Naive thymus-derived CD4-positive, alpha-beta T cell (primary cell): ENCODE measurements at regions of chr7 and their contacts with region 1.

Region 1: DNA sequence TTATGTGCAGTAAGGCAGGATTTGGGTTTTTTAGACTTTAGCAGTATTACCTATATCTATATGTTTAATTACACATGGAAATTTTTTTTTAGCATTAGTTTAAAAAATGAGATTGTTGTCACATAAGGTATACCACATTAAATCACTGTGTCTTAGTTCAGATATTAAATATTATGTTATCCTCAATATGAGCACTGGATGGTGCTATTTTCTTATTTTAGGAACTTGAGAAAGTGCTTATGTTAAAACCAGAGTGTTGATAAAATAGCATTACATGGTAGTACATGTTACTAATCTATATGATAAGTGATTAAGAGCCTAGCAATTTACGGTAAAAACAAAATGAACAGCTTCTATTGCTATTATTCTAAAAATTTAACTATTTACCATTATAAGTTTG is 28.8 kb downstream of the MIOS start:
- DNase-seq: peak in 6 of 9 donors; percentile 14 to 45 (median 36)
- ATAC-seq: peak; percentile 65
- H3K4me3 ChIP-seq: no peak overlapping the region
- H3K4me3 Mint-ChIP-seq: no peak overlapping the region
- H3K27ac ChIP-seq: no peak overlapping the region
- H3K27ac Mint-ChIP-seq: no peak overlapping the region
- H3K4me1 ChIP-seq: peaks cover 0 to 3% of the 10 kb centered on the region in 2 donors
- H3K4me1 Mint-ChIP-seq: no peaks in the 10 kb centered on the region
- H3K27me3 ChIP-seq: no peaks in the 10 kb centered on the region
- H3K27me3 Mint-ChIP-seq: no peaks in the 10 kb centered on the region

Region 2: DNA sequence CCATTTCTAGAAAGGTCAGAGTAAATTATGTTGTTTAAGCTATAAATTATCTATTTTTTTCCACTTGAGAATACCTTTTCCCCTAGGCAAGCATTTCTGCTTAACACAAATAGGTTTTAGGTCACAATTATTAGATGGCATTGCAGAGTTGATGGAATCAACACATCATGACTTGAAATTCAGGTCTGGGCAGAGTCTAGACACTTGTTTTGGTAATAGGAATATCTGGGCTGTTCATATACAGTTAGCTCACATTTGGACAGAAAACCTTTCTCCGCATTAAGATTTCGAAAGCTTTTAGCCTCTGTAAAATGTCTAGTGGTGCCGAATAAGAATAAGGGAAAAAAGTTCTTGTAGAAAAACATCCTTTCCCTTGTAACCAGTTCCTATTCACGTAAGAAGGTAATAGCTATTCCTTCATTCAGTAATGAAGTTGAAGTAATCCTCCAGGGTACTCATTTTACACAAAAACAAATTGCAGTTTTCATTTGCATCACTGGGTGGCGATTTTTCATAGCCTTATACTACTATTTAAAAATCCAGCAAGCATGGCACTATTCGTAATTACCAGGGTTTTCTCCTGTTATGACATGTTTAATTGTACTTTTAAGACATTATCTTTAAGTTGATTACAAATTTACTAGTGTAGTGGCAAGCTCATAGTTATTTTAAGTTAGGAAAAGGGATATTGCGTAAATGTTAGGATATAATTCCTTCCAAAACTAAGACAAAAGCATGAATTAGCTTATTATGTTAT is 85.9 kb after region 1 on chr7:
- CTCF ChIA-PET with region 1: interaction called, 4 read pairs
- POLR2A ChIA-PET with region 1: no interaction called
- intact Hi-C with region 1: loop called (anchors 2 to 5 kb)
- DNase-seq: peak in 7 of 9 donors; percentile 37 to 66 (median 58)
- ATAC-seq: peak; percentile 84
- H3K4me3 ChIP-seq: no peak overlapping the region
- H3K4me3 Mint-ChIP-seq: peak overlapping the region in 5 of 10 donors; percentile 8 to 56 (median 25)
- H3K27ac ChIP-seq: no peak overlapping the region
- H3K27ac Mint-ChIP-seq: peak overlapping the region; percentile 1 to 76 (median 18)
- H3K4me1 ChIP-seq: peaks cover 0 to 15% of the 10 kb centered on the region in 2 donors
- H3K4me1 Mint-ChIP-seq: peaks cover 11 to 48% (median 37%) of the 10 kb centered on the region in 7 donors
- H3K27me3 ChIP-seq: no peaks in the 10 kb centered on the region
- H3K27me3 Mint-ChIP-seq: no peaks in the 10 kb centered on the region

Region 3: DNA sequence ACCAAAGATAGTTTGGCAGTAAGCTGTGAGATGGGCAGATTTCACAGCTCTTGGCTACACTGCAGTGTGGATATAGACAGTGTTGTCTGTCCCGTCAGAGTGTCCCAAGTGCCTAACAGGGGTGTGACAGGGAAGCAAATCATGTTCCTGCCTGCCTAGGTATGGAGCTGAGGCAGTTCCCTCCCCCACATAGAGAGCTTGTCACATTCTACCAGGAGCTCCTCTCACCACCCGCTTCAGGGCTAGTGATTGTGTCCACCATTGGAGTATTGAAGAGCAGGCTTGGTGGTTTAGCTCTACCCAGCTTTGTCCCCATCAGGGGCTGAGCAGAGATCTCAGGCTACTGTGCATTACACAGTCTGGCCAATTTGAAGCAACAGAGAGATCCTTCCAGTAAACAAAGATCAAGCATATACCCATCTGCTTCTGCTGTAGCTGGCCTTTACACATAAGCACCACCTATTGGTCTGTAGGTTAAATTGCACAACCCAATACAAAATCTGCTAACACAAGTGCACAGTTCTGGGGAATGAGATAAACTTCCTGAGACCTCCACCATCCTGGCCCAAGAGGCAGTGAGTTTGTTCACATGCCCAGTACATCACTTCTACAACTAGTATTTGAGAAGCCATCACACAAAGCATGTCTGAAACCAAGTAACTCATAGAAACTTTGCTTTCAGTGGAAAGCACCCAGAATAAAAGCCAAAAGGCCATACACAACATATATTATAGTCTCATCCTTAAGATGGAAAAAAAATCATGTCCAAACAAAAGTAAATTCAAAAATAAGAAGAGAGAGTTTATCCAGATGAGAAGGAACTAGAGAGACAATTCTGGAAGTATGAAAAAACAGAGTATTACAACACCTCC is 440.4 kb after region 1 on chr7:
- CTCF ChIA-PET with region 1: no interaction called
- POLR2A ChIA-PET with region 1: no interaction called
- intact Hi-C with region 1: loop called in 1 of 2 experiments (anchors 2 kb)
- DNase-seq: peak in 7 of 9 donors; percentile 13 to 51 (median 36)
- ATAC-seq: peak; percentile 96
- H3K4me3 ChIP-seq: no peak overlapping the region
- H3K4me3 Mint-ChIP-seq: no peak overlapping the region
- H3K27ac ChIP-seq: no peak overlapping the region
- H3K27ac Mint-ChIP-seq: peak overlapping the region in 8 of 9 donors; percentile 21 to 83 (median 58)
- H3K4me1 ChIP-seq: peaks cover 5 to 6% of the 10 kb centered on the region in 2 donors
- H3K4me1 Mint-ChIP-seq: peaks cover 9 to 28% (median 19%) of the 10 kb centered on the region in 7 donors
- H3K27me3 ChIP-seq: no peaks in the 10 kb centered on the region
- H3K27me3 Mint-ChIP-seq: no peaks in the 10 kb centered on the region

Region 4: GRCh38 chr7:8249121-8249520 is 653.7 kb after region 1 on chr7:
- CTCF ChIA-PET with region 1: no interaction called
- POLR2A ChIA-PET with region 1: no interaction called
- intact Hi-C with region 1: no loop called
- DNase-seq: no peak
- ATAC-seq: no peak
- H3K4me3 ChIP-seq: no peak overlapping the region
- H3K4me3 Mint-ChIP-seq: no peak overlapping the region
- H3K27ac ChIP-seq: no peak overlapping the region
- H3K27ac Mint-ChIP-seq: no peak overlapping the region
- H3K4me1 ChIP-seq: no peaks in the 10 kb centered on the region
- H3K4me1 Mint-ChIP-seq: peaks cover 0 to 2% (median 0%) of the 10 kb centered on the region in 7 donors
- H3K27me3 ChIP-seq: no peaks in the 10 kb centered on the region
- H3K27me3 Mint-ChIP-seq: peaks cover 1 to 25% (median 7%) of the 10 kb centered on the region in 5 donors